Activated CD4-positive, alpha-beta T cell treated with anti-CD3 and anti-CD28 coated beads for 36 hours (primary cell): ENCODE measurements at regions of chr16 and their contacts with region 1.

Region 1: GRCh38 chr16:31186176-31186575 is 6.2 kb downstream of the FUS start:
- DNase-seq: no peak
- ATAC-seq: no peak
- H3K4me3 Mint-ChIP-seq: peak overlapping the region; percentile 25
- H3K27ac Mint-ChIP-seq: peak overlapping the region; percentile 80
- H3K4me1 Mint-ChIP-seq: peaks cover 88% of the 10 kb centered on the region
- H3K27me3 Mint-ChIP-seq: no peaks in the 10 kb centered on the region

Region 2: DNA sequence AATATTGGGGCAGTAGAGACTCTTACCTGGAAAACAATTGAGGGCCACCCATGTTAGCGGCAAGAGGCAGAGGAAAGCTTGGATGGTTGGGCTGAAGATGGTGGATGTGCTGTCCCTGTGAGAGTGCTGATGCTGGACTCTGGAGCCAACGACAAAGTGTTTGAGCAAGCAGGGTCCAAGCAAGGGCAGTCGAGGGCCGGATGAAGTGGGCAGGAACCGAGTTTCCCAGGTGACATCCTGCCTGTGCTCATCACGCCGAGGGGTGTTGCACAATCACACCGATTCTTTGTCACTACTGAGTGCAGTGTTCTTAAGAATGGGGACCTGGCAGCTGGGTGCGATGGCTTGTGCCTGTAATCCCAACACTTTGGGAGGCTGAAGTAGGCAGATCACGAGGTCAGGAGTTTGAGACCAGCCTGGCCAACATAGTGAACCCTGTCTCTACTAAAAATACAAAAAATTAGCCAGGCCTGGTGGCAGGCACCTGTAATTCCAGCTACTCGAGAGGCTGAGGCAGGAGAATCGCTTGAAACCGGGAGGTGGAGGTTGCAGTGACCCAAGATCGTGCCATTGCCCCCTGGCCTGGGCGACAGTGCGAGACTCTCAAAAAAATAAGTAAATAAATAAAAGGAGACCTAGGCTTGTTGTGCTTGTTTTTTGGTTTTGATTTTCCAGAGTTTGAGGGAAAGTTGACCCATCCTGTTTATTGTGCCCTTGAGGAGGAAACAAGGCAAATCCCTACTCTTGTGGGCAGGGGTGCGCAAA is 10.3 kb after region 1 on chr16:
- CTCF ChIA-PET with region 1: no interaction called
- POLR2A ChIA-PET with region 1: interaction called, 16 read pairs
- intact Hi-C with region 1: loop called (anchors 1 to 2 kb)
- DNase-seq: no peak
- ATAC-seq: no peak
- H3K4me3 Mint-ChIP-seq: no peak overlapping the region
- H3K27ac Mint-ChIP-seq: no peak overlapping the region
- H3K4me1 Mint-ChIP-seq: peaks cover 61% of the 10 kb centered on the region
- H3K27me3 Mint-ChIP-seq: no peaks in the 10 kb centered on the region